ENCODE measurements at regions of chr6 and their contacts with region 1.

Region 1: DNA sequence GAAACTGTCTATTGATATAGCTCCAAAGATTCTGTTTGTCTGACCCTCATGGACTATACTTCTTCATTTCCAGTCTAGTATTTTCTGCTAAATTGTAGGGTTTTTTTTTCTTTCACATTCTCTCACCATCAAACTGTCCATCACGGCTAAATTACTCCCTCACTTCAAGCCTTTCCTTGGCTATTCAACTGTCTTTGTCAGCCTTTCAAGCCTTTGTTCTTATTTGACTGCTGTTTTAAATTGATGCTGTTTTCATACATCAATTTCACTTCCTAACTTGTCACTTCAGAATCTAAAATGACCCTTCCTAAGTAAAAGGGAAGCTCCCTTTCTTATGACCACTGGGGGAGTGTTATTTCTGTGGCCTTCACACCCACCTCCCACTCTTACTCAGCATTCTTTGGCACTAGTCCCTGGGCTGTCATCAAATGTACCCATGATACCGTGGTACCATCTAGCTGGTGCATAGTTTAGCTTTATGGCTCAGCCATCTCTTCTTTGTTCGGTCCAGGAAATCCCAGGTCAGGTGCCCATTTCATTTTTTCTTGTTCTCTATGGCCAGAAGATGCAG is 8.6 kb downstream of the GJA1 start:
- DNase-seq: peak in 1 of 2 donors; percentile 52
- ATAC-seq: peak in 7 of 8 donors; percentile 60 to 88 (median 82)
- H3K4me3 ChIP-seq: peak overlapping the region in 4 of 10 donors; percentile 9 to 76 (median 71)
- H3K27ac ChIP-seq: peak overlapping the region in 9 of 10 donors; percentile 21 to 95 (median 47)
- H3K4me1 ChIP-seq: peaks cover 0 to 82% (median 36%) of the 10 kb centered on the region in 9 donors
- H3K27me3 ChIP-seq: peaks cover 0 to under 1% (median 0%) of the 10 kb centered on the region in 7 donors
- CTCF ChIP-seq: peak in 1 of 9 donors; percentile 26

Region 2: GRCh38 chr6:121544691-121545090 is 100.6 kb after region 1 on chr6:
- intact Hi-C with region 1: no loop called
- DNase-seq: no peak
- ATAC-seq: peak in 1 of 8 donors; percentile 41
- H3K4me3 ChIP-seq: no peak overlapping the region
- H3K27ac ChIP-seq: no peak overlapping the region
- H3K4me1 ChIP-seq: no peaks in the 10 kb centered on the region
- H3K27me3 ChIP-seq: no peaks in the 10 kb centered on the region
- CTCF ChIP-seq: no peak

Region 3: GRCh38 chr6:121584586-121585369 is 140.7 kb after region 1 on chr6:
- intact Hi-C with region 1: loop called in 3 of 10 experiments (anchors 10 kb)
- DNase-seq: no peak
- ATAC-seq: peak; percentile 16 to 82 (median 79)
- H3K4me3 ChIP-seq: no peak overlapping the region
- H3K27ac ChIP-seq: peak overlapping the region in 6 of 10 donors; percentile 26 to 59 (median 54)
- H3K4me1 ChIP-seq: peaks cover 0 to 26% (median 6%) of the 10 kb centered on the region in 9 donors
- H3K27me3 ChIP-seq: no peaks in the 10 kb centered on the region
- CTCF ChIP-seq: no peak

Region 4: GRCh38 chr6:121666814-121667213 is 222.8 kb after region 1 on chr6:
- intact Hi-C with region 1: loop called in 2 of 10 experiments (anchors 5 to 10 kb)
- DNase-seq: peak in 1 of 2 donors; percentile 21
- ATAC-seq: peak; percentile 77 to 98 (median 94)
- H3K4me3 ChIP-seq: no peak overlapping the region
- H3K27ac ChIP-seq: peak overlapping the region in 8 of 10 donors; percentile 41 to 77 (median 58)
- H3K4me1 ChIP-seq: peaks cover 0 to 20% (median 12%) of the 10 kb centered on the region in 9 donors
- H3K27me3 ChIP-seq: no peaks in the 10 kb centered on the region
- CTCF ChIP-seq: no peak

Region 5: DNA sequence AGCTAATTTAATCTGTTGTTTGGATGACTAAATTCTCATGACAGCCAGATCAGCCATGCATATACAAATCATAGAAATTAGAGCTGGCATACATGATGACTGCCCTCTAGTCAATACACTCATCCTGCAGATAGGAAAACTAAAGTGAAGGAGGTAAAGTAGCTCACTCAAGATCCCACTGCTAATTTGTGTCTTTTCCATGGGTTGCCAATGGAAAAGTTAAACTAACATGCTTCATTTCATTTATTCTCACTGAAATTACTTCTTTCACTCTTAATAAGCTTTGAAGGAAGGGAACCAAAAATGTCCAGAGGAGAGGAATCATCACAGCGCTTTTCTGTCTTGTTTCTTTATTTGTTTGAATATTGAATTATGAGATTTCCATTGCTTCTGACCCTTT is 299.6 kb after region 1 on chr6:
- intact Hi-C with region 1: no loop called
- DNase-seq: no peak
- ATAC-seq: no peak
- H3K4me3 ChIP-seq: no peak overlapping the region
- H3K27ac ChIP-seq: no peak overlapping the region
- H3K4me1 ChIP-seq: no peaks in the 10 kb centered on the region
- H3K27me3 ChIP-seq: no peaks in the 10 kb centered on the region
- CTCF ChIP-seq: no peak

Region 6: DNA sequence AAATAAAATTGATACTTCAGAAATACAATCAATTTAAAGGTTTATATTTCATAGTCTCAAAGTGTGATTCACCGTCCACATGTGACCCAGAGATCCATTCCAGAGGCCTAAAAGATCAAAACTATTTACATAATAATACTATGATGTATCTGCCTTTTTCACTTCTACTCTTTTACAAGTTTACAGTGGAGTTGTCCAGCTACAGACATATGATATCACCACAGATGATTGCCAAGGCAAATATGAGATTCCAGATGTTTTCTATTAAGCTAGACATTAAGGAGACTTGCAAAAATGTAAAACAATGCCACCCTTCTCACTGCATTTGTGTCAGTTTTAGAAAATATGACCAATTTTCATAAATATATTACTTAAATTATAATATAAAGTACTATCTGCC is 435.1 kb after region 1 on chr6:
- intact Hi-C with region 1: no loop called
- DNase-seq: no peak
- ATAC-seq: no peak
- H3K4me3 ChIP-seq: no peak overlapping the region
- H3K27ac ChIP-seq: no peak overlapping the region
- H3K4me1 ChIP-seq: peaks cover 0 to 13% (median 5%) of the 10 kb centered on the region in 9 donors
- H3K27me3 ChIP-seq: no peaks in the 10 kb centered on the region
- CTCF ChIP-seq: no peak

Measured in heart right ventricle (tissue), 16 donors.